Endothelial cell of umbilical vein (primary cell): ENCODE measurements at regions of chr20 and their contacts with region 1.

Region 1: DNA sequence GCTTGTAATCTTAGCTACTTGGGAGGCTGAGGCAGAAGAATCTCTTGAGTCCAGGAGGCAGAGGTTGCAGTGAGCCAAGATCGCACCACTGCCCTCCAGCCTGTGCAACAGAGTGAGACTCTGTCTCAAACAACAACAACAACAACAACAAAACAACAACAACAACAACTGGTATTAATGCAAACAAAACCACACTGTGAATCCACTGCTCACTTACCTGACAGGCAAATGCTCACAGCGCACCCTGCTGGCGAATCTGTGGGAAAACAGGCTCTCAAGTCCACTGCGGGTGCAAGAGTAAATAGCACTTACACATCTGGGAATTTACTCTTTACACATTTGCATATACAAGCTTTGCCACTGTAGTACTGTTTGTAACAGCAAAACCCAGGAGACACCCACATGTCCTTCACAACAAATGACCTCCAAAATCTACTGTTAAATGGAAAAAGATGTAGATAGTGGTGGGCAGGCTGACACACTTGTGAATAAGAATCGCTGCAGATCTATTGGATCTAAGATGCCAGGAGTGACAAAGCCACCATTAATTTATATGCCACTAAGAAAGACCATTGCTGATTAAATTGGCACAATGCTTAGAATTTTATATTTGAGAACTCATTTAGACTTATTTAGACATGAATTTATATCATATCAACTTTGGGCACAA is 29.3 kb downstream of the NSFL1C start:
- DNase-seq: peak; percentile 80
- H3K4me3 ChIP-seq: no peak overlapping the region
- H3K27ac ChIP-seq: no peak overlapping the region
- H3K4me1 ChIP-seq: peaks cover 18% of the 10 kb centered on the region
- H3K27me3 ChIP-seq: no peaks in the 10 kb centered on the region
- CTCF ChIP-seq: peak; percentile 82 to 85
- POLR2A ChIP-seq: no peak

Region 2: GRCh38 chr20:1177680-1178079 is 259.7 kb before region 1 on chr20:
- CTCF ChIA-PET with region 1: no interaction called
- POLR2A ChIA-PET with region 1: no interaction called
- dilution Hi-C with region 1: no loop called
- intact Hi-C with region 1: no loop called
- DNase-seq: no peak
- H3K4me3 ChIP-seq: no peak overlapping the region
- H3K27ac ChIP-seq: no peak overlapping the region
- H3K4me1 ChIP-seq: no peaks in the 10 kb centered on the region
- H3K27me3 ChIP-seq: peaks cover 0 to 1% of the 10 kb centered on the region in 2 experiments
- CTCF ChIP-seq: no peak
- POLR2A ChIP-seq: no peak

Region 3: DNA sequence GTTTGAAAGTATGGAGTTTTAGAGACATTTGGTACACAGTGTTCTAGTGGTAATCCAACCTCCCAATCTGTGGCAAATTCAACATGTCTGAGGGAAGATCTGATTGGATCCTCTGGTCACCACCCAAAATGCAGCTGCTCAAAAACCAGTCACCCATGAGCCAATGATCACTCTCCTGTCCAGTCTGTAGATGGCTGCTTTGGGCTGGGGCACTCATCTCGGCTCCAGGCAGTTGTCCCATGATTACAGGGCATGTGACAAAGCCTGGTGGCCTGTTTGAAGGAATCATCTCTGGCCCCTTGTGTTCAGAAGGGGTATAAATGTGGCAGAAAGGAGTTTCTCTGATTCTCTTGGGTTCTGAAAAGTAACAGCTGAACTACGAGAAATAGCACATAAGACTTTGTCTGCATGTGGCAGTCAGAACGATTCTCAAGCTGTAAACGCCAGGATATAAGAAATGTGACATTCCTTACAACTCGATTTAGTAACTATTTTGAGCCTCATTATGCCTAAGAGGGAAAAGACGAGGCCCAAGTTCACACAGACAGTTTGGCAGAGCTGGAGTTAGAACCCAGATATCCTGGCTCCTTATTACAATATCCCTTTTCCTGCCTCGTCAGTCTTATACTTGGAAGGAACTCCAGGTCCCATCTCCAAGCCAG is 238.0 kb before region 1 on chr20:
- CTCF ChIA-PET with region 1: no interaction called
- POLR2A ChIA-PET with region 1: no interaction called
- dilution Hi-C with region 1: no loop called
- intact Hi-C with region 1: no loop called
- DNase-seq: no peak
- H3K4me3 ChIP-seq: no peak overlapping the region
- H3K27ac ChIP-seq: no peak overlapping the region
- H3K4me1 ChIP-seq: no peaks in the 10 kb centered on the region
- H3K27me3 ChIP-seq: peaks cover 10% of the 10 kb centered on the region in 2 experiments
- CTCF ChIP-seq: no peak
- POLR2A ChIP-seq: no peak

Region 4: GRCh38 chr20:1313236-1313964 is 124.0 kb before region 1 on chr20:
- CTCF ChIA-PET with region 1: interaction called, 49 read pairs
- POLR2A ChIA-PET with region 1: no interaction called
- dilution Hi-C with region 1: loop called (anchors 25 kb)
- intact Hi-C with region 1: loop called (anchors 1 kb)
- DNase-seq: peak; percentile 78
- H3K4me3 ChIP-seq: peak overlapping the region in 1 of 3 experiments; percentile 8
- H3K27ac ChIP-seq: peak overlapping the region; percentile 61
- H3K4me1 ChIP-seq: peaks cover 9% of the 10 kb centered on the region
- H3K27me3 ChIP-seq: no peaks in the 10 kb centered on the region
- CTCF ChIP-seq: peak; percentile 89 to 95
- POLR2A ChIP-seq: no peak

Region 5: DNA sequence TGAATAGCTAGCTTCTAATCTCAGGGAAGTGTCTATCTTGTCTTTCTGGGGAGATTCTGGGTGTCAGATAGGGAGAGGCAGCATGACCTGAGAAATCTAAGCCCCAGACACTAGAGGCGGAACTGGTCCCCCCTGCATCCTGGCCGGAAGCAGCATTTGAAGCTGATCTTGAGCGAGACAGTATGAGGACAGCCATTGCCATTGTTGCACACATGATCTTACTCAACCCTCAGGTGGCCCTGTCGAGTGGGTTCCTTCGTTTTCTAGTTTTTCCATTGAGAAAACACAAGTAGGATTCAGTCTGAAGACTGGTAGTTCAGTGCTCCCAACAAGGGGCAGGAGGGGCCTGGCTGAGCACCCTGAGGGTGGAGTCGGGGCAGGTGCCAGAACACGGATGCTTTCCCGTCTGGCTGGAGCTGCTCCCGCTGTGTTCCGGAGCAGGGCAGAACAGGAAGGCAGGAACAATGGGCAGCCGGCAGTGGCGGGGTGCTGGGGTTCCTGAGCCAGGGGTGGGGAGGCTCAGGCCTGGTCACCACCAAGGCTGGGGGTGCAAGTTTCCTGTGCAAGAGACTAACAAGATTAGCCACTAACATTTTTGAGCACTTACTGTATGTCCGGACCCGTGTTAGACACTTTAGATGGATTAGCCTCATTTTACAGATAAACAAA is 100.5 kb before region 1 on chr20:
- CTCF ChIA-PET with region 1: interaction called, 10 read pairs
- POLR2A ChIA-PET with region 1: no interaction called
- dilution Hi-C with region 1: no loop called
- intact Hi-C with region 1: no loop called
- DNase-seq: peak; percentile 97
- H3K4me3 ChIP-seq: no peak overlapping the region
- H3K27ac ChIP-seq: peak overlapping the region; percentile 93
- H3K4me1 ChIP-seq: peaks cover 53% of the 10 kb centered on the region
- H3K27me3 ChIP-seq: no peaks in the 10 kb centered on the region
- CTCF ChIP-seq: no peak
- POLR2A ChIP-seq: peak; percentile 59

Region 6: DNA sequence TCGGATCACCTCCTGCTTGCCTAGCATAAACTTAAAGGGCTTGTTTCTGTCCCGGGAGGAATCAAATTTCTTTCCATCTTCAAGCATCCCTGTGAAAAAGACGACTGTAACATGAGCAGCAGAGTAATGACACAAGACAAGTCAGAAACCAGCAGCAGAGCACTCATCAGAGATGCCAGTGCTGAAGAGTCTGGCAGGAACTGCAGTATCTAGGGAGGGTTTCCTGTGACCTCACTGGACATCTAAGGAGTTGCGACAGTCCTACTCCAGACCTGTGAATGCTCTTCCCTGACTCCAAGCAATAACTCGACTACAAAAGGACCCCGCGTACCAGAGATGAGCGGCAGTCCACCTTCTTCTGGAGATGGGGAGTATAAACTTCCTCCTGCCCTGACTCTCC is 61.9 kb before region 1 on chr20:
- CTCF ChIA-PET with region 1: interaction called, 55 read pairs
- POLR2A ChIA-PET with region 1: no interaction called
- dilution Hi-C with region 1: no loop called
- intact Hi-C with region 1: loop called (anchors 1 kb)
- DNase-seq: peak; percentile 47
- H3K4me3 ChIP-seq: no peak overlapping the region
- H3K27ac ChIP-seq: peak overlapping the region; percentile 83
- H3K4me1 ChIP-seq: peaks cover 99% of the 10 kb centered on the region
- H3K27me3 ChIP-seq: no peaks in the 10 kb centered on the region
- CTCF ChIP-seq: no peak
- POLR2A ChIP-seq: peak; percentile 45

Region 7: DNA sequence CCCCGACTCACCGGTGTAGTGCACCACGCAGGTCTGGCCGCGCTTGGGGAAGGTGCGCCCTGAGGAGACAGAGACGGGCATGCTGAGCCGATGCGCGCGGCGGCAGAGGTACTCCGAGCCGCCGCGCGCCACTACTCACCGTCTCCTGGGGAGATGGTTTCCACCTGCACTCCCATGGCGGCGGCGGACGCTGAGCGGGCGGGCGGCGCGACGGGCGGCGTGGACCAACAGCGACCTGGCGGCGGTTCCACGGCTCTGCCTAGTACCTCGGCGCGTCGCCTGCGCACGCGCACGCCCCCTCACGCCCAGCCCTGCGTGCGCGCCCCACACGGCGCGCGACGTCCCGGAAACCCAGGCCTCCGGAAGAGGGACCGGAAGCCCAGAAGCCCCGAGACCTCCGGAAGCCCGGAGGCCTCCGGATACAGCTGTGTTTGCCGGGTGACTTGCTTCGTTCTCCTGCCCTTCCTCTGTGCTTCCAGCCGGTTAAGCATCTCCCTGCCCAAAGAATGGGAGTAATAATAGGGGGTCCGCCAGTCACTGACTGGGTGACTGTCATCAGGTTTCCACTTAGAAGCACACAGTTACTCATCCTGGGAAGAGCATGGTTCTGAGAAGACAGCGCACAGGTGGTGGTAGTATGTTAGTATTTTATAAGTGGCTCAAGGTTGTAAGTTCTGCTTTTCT is 44.4 kb before region 1 on chr20 and contains the start of gene FKBP1A:
- CTCF ChIA-PET with region 1: interaction called, 107 read pairs
- POLR2A ChIA-PET with region 1: interaction called, 5 read pairs
- dilution Hi-C with region 1: no loop called
- intact Hi-C with region 1: loop called (anchors 1 kb)
- DNase-seq: peak; percentile 90
- H3K4me3 ChIP-seq: peak within 1 kb of the TSS; percentile 82 to 86 (median 83)
- H3K27ac ChIP-seq: peak within 1 kb of the TSS; percentile 90
- H3K4me1 ChIP-seq: peaks cover 70% of the 10 kb centered on the region
- H3K27me3 ChIP-seq: no peaks in the 10 kb centered on the region
- CTCF ChIP-seq: peak in 1 of 2 donors; percentile 8
- POLR2A ChIP-seq: peak; percentile 92
- total RNA-seq, gene FKBP1A: 968 and 982 TPM in 2 replicates

Region 8: GRCh38 chr20:1466211-1467081 is 29.1 kb after region 1 on chr20 and contains the start of gene NSFL1C:
- CTCF ChIA-PET with region 1: interaction called, 4 read pairs
- POLR2A ChIA-PET with region 1: no interaction called
- dilution Hi-C with region 1: no loop called
- intact Hi-C with region 1: loop called (anchors 1 kb)
- DNase-seq: peak; percentile 94
- H3K4me3 ChIP-seq: peak within 1 kb of the TSS; percentile 51 to 95 (median 75)
- H3K27ac ChIP-seq: peak within 1 kb of the TSS; percentile 78
- H3K4me1 ChIP-seq: peaks cover 35% of the 10 kb centered on the region
- H3K27me3 ChIP-seq: no peaks in the 10 kb centered on the region
- CTCF ChIP-seq: peak; percentile 69 to 91
- POLR2A ChIP-seq: peak; percentile 76
- total RNA-seq, gene NSFL1C: 95.7 and 107 TPM in 2 replicates

Region 9: GRCh38 chr20:1600736-1601135 is 163.4 kb after region 1 on chr20:
- CTCF ChIA-PET with region 1: no interaction called
- POLR2A ChIA-PET with region 1: no interaction called
- dilution Hi-C with region 1: no loop called
- intact Hi-C with region 1: no loop called
- DNase-seq: no peak
- H3K4me3 ChIP-seq: no peak overlapping the region
- H3K27ac ChIP-seq: no peak overlapping the region
- H3K4me1 ChIP-seq: no peaks in the 10 kb centered on the region
- H3K27me3 ChIP-seq: no peaks in the 10 kb centered on the region
- CTCF ChIP-seq: no peak
- POLR2A ChIP-seq: no peak